ENCODE measurements at regions of chr17 and their contacts with region 1.

Region 1: GRCh38 chr17:74446551-74447500 is 14.9 kb downstream of the GPRC5C start:
- DNase-seq: peak; percentile 88 to 99
- H3K4me3 ChIP-seq: peak overlapping the region in 1 of 2 donors; percentile 20
- H3K27ac ChIP-seq: peak overlapping the region; percentile 85 to 89
- H3K4me1 ChIP-seq: peaks cover 12 to 98% (median 92%) of the 10 kb centered on the region in 4 donors
- H3K27me3 ChIP-seq: no peaks in the 10 kb centered on the region
- CTCF ChIP-seq: peak; percentile 36 to 53

Region 2: GRCh38 chr17:74212913-74213791 is 233.7 kb before region 1 on chr17 and contains the start of gene TTYH2:
- intact Hi-C with region 1: loop called (anchors 5 kb)
- DNase-seq: peak; percentile 92 to 96
- H3K4me3 ChIP-seq: peak within 1 kb of the TSS; percentile 51 to 61
- H3K27ac ChIP-seq: peak within 1 kb of the TSS; percentile 70 to 79
- H3K4me1 ChIP-seq: peaks cover 0 to 49% (median 33%) of the 10 kb centered on the region in 4 donors
- H3K27me3 ChIP-seq: no peaks in the 10 kb centered on the region
- CTCF ChIP-seq: peak; percentile 13 to 33

Region 3: DNA sequence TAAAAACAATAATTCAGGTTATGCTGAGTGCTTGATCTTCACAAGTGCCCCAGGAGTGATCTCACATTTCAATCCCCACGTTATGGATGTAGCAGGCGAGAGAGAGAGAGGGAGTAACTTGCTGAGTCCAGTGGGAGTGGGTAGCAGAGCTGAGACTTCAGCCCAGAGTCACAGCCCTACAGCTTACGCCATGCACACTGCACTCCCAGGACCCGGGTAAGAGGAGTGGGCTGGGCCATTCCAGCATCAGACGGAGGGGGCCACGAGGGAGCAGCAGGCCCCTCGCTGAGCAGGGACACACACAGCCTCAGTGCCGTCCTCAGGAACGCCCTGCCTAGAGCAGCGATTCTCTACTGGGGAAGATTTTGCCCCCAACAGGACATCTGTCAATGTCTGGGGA is 130.6 kb before region 1 on chr17:
- intact Hi-C with region 1: no loop called
- DNase-seq: no peak
- H3K4me3 ChIP-seq: no peak overlapping the region
- H3K27ac ChIP-seq: no peak overlapping the region
- H3K4me1 ChIP-seq: no peaks in the 10 kb centered on the region
- H3K27me3 ChIP-seq: peaks cover 0 to 12% of the 10 kb centered on the region in 2 donors
- CTCF ChIP-seq: no peak

Region 4: DNA sequence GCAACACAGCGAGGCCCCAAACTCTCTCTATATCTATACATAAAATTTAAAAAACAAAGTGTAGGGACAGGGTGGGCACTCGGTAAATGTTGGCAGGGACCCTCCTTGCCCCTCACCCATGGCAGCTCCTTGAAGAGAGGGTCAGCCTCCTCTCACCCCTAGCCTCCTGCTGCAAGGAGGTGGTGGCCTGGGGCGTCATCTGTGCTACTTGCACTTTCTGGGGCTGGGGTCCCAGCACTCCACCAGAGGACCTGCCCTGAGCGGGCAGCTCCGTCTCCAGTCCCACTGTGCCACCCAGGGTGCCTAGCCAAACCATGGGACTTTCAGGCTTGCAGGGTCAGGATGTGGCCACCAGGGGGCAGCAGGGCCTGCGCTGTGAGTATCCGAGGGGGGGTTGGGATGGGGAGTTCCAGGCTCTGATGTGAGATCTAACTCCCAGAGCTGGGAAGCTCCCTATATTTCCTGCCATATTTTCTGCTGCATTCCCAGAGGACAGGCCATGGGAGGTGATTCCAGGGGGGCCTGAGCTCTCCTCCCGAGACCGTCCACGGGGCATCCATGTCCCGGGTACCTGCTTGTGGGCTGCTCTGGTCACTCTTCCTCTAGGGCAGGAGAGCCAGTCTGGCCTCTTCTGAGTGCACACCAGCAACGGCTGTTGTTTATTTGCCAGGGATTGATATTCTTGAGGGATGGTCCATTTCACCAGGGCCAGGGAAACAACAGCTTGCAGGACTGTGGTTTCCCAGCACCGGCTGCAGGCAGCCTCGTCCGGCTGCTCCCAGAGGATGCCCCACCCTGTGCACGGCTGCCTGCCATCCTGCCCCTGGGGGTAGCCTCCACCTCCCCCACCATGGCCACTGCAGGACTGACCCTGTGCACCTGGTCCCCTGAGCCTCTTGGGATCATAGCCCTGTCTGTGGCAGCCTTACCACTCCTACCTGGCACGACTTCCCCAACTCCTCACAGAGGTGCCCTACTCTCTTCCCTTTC is 78.4 kb before region 1 on chr17:
- intact Hi-C with region 1: no loop called
- DNase-seq: peak; percentile 61 to 83
- H3K4me3 ChIP-seq: no peak overlapping the region
- H3K27ac ChIP-seq: no peak overlapping the region
- H3K4me1 ChIP-seq: peaks cover 0 to 6% (median 3%) of the 10 kb centered on the region in 4 donors
- H3K27me3 ChIP-seq: peaks cover 0 to 57% of the 10 kb centered on the region in 2 donors
- CTCF ChIP-seq: peak; percentile 91 to 98

Region 5: GRCh38 chr17:75313941-75314551 is 867.2 kb after region 1 on chr17:
- intact Hi-C with region 1: no loop called
- DNase-seq: no peak
- H3K4me3 ChIP-seq: no peak overlapping the region
- H3K27ac ChIP-seq: no peak overlapping the region
- H3K4me1 ChIP-seq: no peaks in the 10 kb centered on the region
- H3K27me3 ChIP-seq: no peaks in the 10 kb centered on the region
- CTCF ChIP-seq: no peak